Sigmoid colon (tissue), 7 donors: ENCODE measurements at regions of chr20 and their contacts with region 1.

Region 1: DNA sequence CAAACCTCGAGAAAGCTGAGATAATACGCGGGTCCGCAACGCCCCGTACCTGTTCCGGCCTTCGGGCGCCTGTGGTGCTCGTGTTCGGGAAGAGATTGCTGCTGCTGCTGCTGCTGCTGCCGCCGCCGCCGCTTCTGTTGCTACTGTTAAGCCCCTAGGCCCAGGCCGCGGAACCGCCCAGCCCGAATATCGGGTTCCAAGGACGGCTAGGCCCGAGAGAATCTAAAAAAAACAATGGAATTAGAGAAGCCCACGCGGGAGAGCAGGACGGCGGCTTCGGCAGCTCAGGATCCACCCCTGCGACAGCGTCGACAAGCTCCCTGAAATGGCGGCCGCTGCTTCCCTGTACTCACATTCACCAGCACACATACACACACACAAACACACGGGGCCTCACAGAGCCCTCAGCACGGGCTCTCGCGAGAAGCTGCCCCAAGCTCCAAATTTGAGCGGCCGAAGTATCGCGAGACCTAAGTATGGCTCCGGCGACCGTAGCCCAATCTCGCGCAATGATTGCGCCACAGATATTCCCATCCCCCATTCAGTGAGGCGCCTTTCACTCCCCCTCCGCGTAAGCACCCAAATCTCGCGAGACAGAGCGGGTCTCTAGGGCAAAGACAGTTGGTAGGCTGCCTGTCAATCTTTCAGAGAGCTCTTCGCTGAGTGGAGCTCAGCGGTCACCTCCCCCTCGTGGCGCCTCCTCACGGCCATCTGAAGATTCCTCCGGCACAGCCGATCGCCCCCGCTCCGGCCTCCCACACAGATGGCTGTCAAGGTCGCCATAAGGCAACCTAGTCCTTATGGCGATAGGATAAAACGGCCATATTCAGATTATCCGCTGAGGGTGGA is at the start of gene RBM39:
- DNase-seq: peak; percentile 100
- H3K4me3 ChIP-seq: peak within 1 kb of the TSS; percentile 66 to 79 (median 74)
- H3K27ac ChIP-seq: peak within 1 kb of the TSS; percentile 94 to 98 (median 97)
- H3K4me1 ChIP-seq: peaks cover 0 to 41% (median 40%) of the 10 kb centered on the region in 4 donors
- H3K27me3 ChIP-seq: no peaks in the 10 kb centered on the region
- CTCF ChIP-seq: peak in 2 of 4 experiments; percentile 25 to 31
- EP300 ChIP-seq: peak in 2 of 4 donors; percentile 6 to 67
- POLR2A ChIP-seq: peak; percentile 96 to 97
- total RNA-seq, gene RBM39: 281 to 408 (median 296) TPM

Region 2: DNA sequence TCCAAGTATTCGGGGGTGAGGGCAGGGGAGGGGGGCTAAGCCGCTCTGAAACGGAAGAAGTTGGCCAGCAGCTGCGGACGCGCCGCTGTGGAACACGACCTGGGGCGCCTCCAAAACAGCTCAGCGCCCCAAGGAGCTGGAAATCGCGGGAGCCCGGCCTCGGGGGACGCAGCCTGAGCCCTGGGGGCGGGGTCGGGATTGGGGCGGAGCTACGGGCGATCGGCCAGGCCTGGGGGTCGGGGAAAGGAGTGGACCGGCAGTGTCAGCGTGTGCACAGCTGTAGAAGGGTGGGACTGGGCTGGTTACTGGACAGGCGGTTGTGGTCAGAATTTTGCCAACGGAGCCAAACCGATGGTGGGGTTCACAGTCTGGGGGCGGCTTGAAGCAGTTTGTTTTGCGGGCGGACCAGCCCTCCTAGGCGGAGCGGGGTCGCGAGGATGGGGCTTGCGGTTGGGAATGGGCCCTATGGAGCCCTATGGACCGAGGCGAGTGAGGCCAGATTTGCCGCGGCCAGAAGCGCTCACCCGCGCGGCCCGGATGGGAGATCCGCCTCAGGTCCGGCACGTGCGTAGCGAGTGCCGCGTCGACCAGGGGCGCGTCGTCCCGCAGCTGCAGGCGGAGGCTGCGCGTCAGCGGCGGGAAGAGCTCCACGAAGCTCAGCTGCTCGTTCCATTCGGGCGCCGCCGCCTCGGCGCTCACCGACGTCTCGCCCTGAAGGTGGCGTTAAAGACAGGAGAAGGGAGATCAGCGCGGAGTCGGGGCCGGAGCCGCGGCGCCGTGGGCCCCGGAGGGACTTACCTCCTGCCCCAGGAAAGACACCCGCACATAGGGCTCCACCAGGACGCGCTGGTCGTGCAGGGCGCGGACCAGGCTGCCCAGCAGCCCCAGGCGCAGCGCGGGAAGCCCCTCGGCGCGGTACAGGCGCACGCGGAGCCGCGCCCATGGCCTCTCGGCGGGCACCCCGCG is 140.8 kb before region 1 on chr20:
- intact Hi-C with region 1: loop called (anchors 5 kb)
- DNase-seq: peak; percentile 91
- H3K4me3 ChIP-seq: peak overlapping the region; percentile 26 to 59 (median 50)
- H3K27ac ChIP-seq: peak overlapping the region in 2 of 4 donors; percentile 47 to 62
- H3K4me1 ChIP-seq: peaks cover 0 to 19% (median 19%) of the 10 kb centered on the region in 4 donors
- H3K27me3 ChIP-seq: peaks cover 0 to 29% (median 5%) of the 10 kb centered on the region in 3 donors
- CTCF ChIP-seq: peak; percentile 15 to 33 (median 26)
- EP300 ChIP-seq: no peak
- POLR2A ChIP-seq: no peak

Region 3: DNA sequence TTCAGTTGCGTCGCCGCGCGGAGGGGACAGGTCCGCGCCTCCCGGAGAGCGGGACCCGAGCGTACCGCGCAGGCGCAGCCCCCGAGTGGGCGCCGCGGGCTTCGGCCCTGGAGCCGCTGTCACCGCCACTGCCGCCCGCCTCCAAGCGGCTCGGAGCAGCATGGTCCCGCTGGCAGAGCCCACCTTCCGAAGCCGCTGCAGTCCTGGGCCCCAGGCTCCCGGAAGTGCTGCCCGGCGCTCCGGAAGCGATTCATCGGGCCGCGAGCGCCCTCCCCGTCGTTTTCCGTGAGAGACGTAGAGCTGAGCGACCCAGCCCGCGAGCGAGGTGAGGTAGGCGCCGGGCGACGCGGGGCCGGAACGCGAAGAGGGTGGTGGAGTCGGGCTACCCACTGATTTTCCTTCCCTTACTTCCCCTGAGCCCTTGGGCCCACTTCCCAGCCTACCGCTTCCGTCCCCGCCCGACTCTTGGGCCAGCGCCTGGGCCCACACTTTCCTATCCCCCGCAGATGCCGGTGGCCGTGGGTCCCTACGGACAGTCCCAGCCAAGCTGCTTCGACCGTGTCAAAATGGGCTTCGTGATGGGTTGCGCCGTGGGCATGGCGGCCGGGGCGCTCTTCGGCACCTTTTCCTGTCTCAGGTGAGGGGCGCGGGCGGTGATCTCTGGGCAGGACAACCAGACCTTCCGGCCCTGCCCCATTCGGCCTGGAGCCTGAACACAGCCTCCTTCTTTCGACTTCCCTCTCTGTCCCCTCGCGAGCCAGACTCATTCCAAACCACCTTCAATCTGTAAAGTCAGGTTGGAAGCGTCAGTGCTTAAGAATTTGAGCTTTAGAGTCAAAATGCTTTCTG is 42.8 kb before region 1 on chr20 and contains the starts of genes NFS1 and ROMO1:
- intact Hi-C with region 1: loop called (anchors 5 kb)
- DNase-seq: peak; percentile 92
- H3K4me3 ChIP-seq: peak within 1 kb of the TSS; percentile 78 to 93 (median 90)
- H3K27ac ChIP-seq: peak within 1 kb of the TSS; percentile 87 to 92 (median 90)
- H3K4me1 ChIP-seq: peaks cover 0 to 28% (median 24%) of the 10 kb centered on the region in 4 donors
- H3K27me3 ChIP-seq: no peaks in the 10 kb centered on the region
- CTCF ChIP-seq: peak in 1 of 4 experiments; percentile 20
- EP300 ChIP-seq: no peak
- POLR2A ChIP-seq: peak; percentile 46 to 61
- total RNA-seq, gene NFS1: 25.2 to 39.2 (median 32.3) TPM
- total RNA-seq, gene ROMO1: 206 to 512 (median 398) TPM

Region 4: DNA sequence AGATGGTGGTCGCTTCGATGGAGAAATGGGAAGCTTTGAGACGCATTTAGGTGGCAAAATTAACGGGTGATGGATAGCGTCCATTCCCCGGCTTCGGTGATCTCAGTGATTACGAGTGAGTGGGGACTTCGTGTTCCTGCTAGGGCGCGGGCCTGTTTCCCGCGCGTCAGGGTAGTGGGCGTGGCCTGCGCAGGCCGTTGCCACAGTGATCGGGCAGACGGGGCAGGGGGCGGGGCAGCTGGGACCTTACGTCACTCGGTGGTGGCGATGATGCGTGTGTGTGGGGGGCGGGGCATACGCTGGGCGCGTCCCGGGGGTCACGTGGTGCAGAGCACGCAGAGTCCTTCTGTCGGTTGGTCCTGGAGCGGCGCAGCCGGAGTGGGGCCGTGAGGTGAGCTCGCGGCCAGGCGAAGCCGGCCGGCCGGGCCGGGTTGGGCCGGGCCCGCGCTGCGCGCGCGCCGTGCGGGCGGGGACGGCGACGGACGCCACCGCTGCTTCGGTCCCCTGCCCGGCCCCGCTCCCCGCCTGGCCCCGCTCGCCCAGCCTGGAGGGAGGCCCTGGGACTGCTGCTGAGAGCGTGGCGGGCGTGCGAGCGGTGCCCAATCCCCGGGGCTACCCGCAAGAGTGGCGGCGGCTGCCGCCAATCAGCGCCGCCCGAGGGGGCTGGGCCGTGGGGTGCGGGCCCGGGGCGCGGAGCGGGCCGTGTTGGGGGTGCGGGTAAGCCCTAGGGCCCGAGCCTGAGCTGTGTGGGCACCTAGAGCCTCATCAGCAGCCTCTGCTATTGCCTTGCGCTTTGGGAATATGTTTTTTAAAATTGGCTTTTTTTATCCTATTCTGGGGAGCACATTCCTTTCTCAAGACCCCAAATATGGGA is 29.8 kb after region 1 on chr20 and contains the start of gene PHF20:
- intact Hi-C with region 1: loop called (anchors 1 kb)
- DNase-seq: peak; percentile 100
- H3K4me3 ChIP-seq: peak within 1 kb of the TSS; percentile 62 to 84 (median 73)
- H3K27ac ChIP-seq: peak within 1 kb of the TSS; percentile 93 to 97 (median 94)
- H3K4me1 ChIP-seq: peaks cover 0 to 60% (median 38%) of the 10 kb centered on the region in 4 donors
- H3K27me3 ChIP-seq: no peaks in the 10 kb centered on the region
- CTCF ChIP-seq: no peak
- EP300 ChIP-seq: peak; percentile 95 to 99 (median 97)
- POLR2A ChIP-seq: peak in 1 of 2 donors; percentile 29
- total RNA-seq, gene PHF20: 41.0 to 49.7 (median 45.5) TPM

Region 5: DNA sequence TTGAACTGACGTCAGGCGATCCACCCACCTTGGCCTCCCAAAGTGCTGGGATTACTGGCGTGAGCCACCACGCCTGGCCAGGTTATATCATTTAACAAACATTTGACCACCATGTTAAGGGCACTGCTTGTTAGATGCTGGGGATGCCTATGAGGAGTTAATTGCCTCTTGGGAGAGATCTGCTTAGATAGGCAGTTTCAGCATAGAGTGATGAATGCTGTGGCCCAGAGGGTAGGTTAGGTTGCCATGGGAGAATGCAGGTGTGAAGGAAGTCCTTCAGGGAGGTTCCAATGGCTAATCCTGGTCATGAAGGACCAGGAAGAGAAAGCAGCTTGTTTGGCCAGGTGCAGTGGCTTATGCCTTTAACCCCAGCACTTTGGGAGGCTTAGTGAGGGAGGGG is 46.7 kb after region 1 on chr20:
- intact Hi-C with region 1: no loop called
- DNase-seq: no peak
- H3K4me3 ChIP-seq: no peak overlapping the region
- H3K27ac ChIP-seq: no peak overlapping the region
- H3K4me1 ChIP-seq: peaks cover 0 to 16% (median 10%) of the 10 kb centered on the region in 4 donors
- H3K27me3 ChIP-seq: no peaks in the 10 kb centered on the region
- CTCF ChIP-seq: no peak
- EP300 ChIP-seq: no peak
- POLR2A ChIP-seq: no peak

Region 6: DNA sequence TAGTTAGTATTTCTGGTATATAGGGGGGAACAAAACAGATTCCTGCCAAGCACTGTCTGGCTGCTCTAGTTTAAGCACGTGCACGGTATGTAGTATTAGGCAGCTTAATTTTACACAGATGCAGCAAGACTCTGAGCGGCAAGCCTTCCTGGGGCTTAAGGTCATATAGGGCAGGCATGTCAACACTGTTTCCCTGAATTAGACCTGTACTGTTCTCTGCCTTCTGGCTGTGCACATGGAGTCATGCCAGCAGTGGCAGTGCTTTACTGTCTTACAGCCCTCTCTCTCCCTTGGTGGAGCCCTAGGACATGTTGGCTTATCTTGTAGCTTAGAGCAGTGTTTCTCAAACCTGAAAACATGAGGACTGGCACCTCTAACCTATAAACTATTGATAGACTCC is 86.3 kb after region 1 on chr20:
- intact Hi-C with region 1: no loop called
- DNase-seq: no peak
- H3K4me3 ChIP-seq: no peak overlapping the region
- H3K27ac ChIP-seq: no peak overlapping the region
- H3K4me1 ChIP-seq: peaks cover 0 to 13% (median 0%) of the 10 kb centered on the region in 4 donors
- H3K27me3 ChIP-seq: no peaks in the 10 kb centered on the region
- CTCF ChIP-seq: no peak
- EP300 ChIP-seq: no peak
- POLR2A ChIP-seq: no peak

Region 7: GRCh38 chr20:35849706-35850105 is 107.6 kb after region 1 on chr20:
- intact Hi-C with region 1: no loop called
- DNase-seq: no peak
- H3K4me3 ChIP-seq: no peak overlapping the region
- H3K27ac ChIP-seq: no peak overlapping the region
- H3K4me1 ChIP-seq: peaks cover 0 to 10% (median 2%) of the 10 kb centered on the region in 4 donors
- H3K27me3 ChIP-seq: no peaks in the 10 kb centered on the region
- CTCF ChIP-seq: no peak
- EP300 ChIP-seq: no peak
- POLR2A ChIP-seq: no peak

Region 8: GRCh38 chr20:35954200-35954906 is 212.2 kb after region 1 on chr20 and contains the start of gene SCAND1:
- intact Hi-C with region 1: loop called (anchors 5 kb)
- DNase-seq: peak; percentile 97
- H3K4me3 ChIP-seq: peak within 1 kb of the TSS; percentile 85 to 96 (median 92)
- H3K27ac ChIP-seq: peak within 1 kb of the TSS; percentile 97 to 98 (median 98)
- H3K4me1 ChIP-seq: peaks cover 0 to 31% (median 24%) of the 10 kb centered on the region in 4 donors
- H3K27me3 ChIP-seq: no peaks in the 10 kb centered on the region
- CTCF ChIP-seq: peak; percentile 66 to 95 (median 88)
- EP300 ChIP-seq: no peak
- POLR2A ChIP-seq: peak; percentile 67 to 77
- total RNA-seq, gene SCAND1: 61.2 to 83.1 (median 70.8) TPM